MCF 10A (cell line): ENCODE measurements at regions of chr7 and their contacts with region 1.

Region 1: GRCh38 chr7:29622335-29623265 is 59.0 kb downstream of the PRR15 start:
- DNase-seq: peak; percentile 95
- H3K4me3 Mint-ChIP-seq: peak overlapping the region; percentile 66
- H3K27ac Mint-ChIP-seq: peak overlapping the region; percentile 88
- H3K4me1 Mint-ChIP-seq: peaks cover 31% of the 10 kb centered on the region
- H3K27me3 Mint-ChIP-seq: no peaks in the 10 kb centered on the region
- CTCF ChIP-seq: no peak

Region 2: GRCh38 chr7:29457565-29458011 is 165.0 kb before region 1 on chr7:
- CTCF ChIA-PET with region 1: no interaction called
- POLR2A ChIA-PET with region 1: no interaction called
- intact Hi-C with region 1: no loop called
- DNase-seq: no peak
- H3K4me3 Mint-ChIP-seq: no peak overlapping the region
- H3K27ac Mint-ChIP-seq: no peak overlapping the region
- H3K4me1 Mint-ChIP-seq: no peaks in the 10 kb centered on the region
- H3K27me3 Mint-ChIP-seq: no peaks in the 10 kb centered on the region
- CTCF ChIP-seq: no peak

Region 3: DNA sequence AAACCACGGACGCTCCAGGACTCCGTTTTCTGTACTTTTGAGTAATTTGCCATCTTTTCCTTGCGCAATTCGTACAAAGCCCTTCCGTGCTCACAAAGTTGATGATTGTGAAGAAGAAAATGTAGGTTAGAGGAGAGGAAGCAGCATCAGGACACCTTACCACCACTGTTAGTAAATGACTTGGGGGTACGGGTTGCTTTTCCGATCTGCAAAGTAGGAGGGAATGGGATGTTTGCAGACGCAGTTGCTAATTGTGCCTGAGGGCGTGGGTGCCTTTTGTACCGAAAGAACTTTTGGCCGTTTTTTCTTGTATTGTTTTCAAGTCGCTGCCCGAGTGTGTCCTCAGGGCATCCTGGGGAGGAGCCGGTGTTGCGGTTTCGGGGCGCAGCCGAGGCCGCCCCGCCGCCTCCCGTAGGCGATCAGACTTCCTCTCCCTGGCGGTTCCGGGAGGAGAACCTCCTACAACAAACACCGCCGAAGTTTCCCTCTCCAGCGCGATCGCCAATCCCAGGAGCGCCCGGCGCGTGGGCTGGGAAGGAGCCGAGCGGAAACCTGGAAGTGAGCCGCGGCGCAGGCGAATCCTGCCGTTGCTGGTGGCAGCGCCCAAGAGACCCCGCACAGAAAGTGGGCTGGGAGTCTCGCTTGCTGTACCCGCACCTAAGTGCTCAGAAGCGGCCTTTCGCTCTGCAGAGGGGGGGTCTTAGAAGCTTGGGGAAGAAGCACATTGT is 57.9 kb before region 1 on chr7:
- CTCF ChIA-PET with region 1: interaction called, 5 read pairs
- POLR2A ChIA-PET with region 1: interaction called, 5 read pairs
- intact Hi-C with region 1: loop called (anchors 5 kb)
- DNase-seq: peak; percentile 90
- H3K4me3 Mint-ChIP-seq: peak overlapping the region; percentile 98
- H3K27ac Mint-ChIP-seq: peak overlapping the region; percentile 94
- H3K4me1 Mint-ChIP-seq: peaks cover 19% of the 10 kb centered on the region
- H3K27me3 Mint-ChIP-seq: no peaks in the 10 kb centered on the region
- CTCF ChIP-seq: no peak

Region 4: DNA sequence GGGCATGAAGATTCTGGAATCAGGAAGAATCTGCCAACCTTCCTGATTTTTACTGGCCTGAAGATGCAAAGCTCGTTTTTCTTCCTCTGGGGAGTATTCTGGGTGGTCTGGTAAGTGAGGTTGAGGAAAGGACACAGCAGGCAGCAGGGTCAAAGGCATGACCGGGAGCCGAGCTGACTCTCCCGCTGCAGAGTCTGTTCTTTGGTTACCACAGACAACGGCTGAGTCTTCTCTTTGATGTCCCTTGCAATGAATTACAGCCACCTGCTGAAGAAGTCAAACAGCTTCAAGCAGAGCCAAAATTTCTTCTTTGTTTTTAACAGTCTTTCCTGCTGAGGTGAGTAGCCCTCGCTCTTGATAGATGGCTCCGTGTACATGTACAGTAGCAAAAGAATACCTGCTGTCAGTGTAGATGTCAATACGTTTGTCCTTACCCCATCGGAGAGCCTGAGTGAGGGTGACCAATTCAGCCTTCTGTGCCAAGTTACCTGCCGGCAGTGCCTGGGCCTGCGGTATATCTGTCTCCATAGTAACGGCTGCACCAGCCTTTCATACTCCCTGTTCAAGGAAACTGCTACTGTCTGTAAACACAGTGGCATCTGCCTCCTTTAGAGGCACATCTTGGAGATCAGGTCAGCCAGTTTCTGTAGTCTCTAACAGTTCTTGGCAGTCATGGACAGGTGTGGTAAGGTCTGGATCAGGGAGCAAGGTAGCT is 17.4 kb after region 1 on chr7:
- CTCF ChIA-PET with region 1: interaction called, 13 read pairs
- POLR2A ChIA-PET with region 1: interaction called, 3 read pairs
- intact Hi-C with region 1: no loop called
- DNase-seq: no peak
- H3K4me3 Mint-ChIP-seq: no peak overlapping the region
- H3K27ac Mint-ChIP-seq: no peak overlapping the region
- H3K4me1 Mint-ChIP-seq: peaks cover 5% of the 10 kb centered on the region
- H3K27me3 Mint-ChIP-seq: no peaks in the 10 kb centered on the region
- CTCF ChIP-seq: no peak